SK-N-SH (cell line): ENCODE measurements at regions of chr15 and their contacts with region 1.

Region 1: GRCh38 chr15:93030430-93031105 is 58.4 kb downstream of the RGMA start:
- DNase-seq: peak; percentile 91
- H3K4me3 ChIP-seq: peak overlapping the region in 1 of 2 experiments; percentile 1; a peak in 1 of 4 replicates
- H3K27ac ChIP-seq: no peak overlapping the region; a peak in 1 of 4 replicates
- H3K4me1 ChIP-seq: peaks cover 19 to 20% of the 10 kb centered on the region in 2 experiments; a peak in 3 of 4 replicates
- H3K27me3 ChIP-seq: no peaks in the 10 kb centered on the region
- CTCF ChIP-seq: peak; percentile 84
- EP300 ChIP-seq: no peak
- RAD21 ChIP-seq: peak; percentile 91

Region 2: GRCh38 chr15:92797168-92797951 is 233.2 kb before region 1 on chr15:
- CTCF ChIA-PET with region 1: interaction called, 23 read pairs
- POLR2A ChIA-PET with region 1: no interaction called
- DNase-seq: peak; percentile 62
- H3K4me3 ChIP-seq: no peak overlapping the region
- H3K27ac ChIP-seq: peak overlapping the region in 1 of 2 experiments; percentile 27; a peak in 1 of 4 replicates
- H3K4me1 ChIP-seq: no peaks in the 10 kb centered on the region
- H3K27me3 ChIP-seq: no peaks in the 10 kb centered on the region
- CTCF ChIP-seq: peak; percentile 80
- EP300 ChIP-seq: no peak
- RAD21 ChIP-seq: peak; percentile 80

Region 3: GRCh38 chr15:92845126-92845508 is 185.5 kb before region 1 on chr15:
- CTCF ChIA-PET with region 1: no interaction called
- POLR2A ChIA-PET with region 1: no interaction called
- DNase-seq: no peak
- H3K4me3 ChIP-seq: no peak overlapping the region
- H3K27ac ChIP-seq: peak overlapping the region; percentile 26 to 61; a peak in 2 of 4 replicates
- H3K4me1 ChIP-seq: peaks cover 0 to 3% of the 10 kb centered on the region in 2 experiments; a peak in 1 of 4 replicates
- H3K27me3 ChIP-seq: no peaks in the 10 kb centered on the region
- CTCF ChIP-seq: no peak
- EP300 ChIP-seq: no peak
- RAD21 ChIP-seq: no peak

Region 4: DNA sequence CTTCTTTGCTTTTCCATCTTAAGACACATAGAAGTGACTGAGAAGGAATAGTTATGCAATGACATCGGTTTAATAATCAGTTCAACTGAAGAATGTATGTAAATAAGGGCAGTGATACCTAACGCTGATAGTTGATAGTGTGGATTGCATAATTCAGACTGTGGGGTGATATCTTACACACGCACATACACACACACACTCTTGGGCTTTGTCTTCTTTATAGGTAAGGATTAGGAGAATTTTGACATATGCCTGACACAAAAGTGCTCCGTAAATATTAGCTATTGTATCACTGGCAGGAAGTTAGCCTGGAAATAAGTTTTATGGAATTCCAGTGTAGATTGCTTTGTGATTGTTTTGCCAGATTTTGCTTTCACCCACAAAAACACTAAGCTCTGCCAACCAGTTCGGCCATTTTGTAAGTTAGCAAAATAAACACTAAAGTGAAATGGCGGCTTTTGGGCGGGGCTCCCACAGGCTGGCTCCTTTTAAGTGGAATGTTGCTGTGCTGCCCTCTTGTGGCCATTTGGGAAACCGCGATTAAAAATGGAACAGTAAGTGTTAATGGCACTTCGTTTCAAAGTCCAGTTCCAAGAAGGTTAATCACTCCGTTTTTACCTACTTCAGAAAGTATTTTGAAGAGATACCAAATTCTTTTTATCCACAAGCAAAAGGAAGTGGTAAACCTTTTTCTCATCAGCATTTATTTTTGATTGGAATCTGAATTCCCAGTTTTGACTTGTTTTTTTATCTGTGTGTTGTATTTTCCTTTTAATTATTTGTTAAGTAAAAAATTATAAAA is 112.8 kb before region 1 on chr15:
- CTCF ChIA-PET with region 1: no interaction called
- POLR2A ChIA-PET with region 1: no interaction called
- DNase-seq: peak; percentile 76
- H3K4me3 ChIP-seq: no peak overlapping the region; a peak in 1 of 4 replicates
- H3K27ac ChIP-seq: peak overlapping the region; percentile 88 to 90
- H3K4me1 ChIP-seq: peaks cover 9 to 41% of the 10 kb centered on the region in 2 experiments
- H3K27me3 ChIP-seq: no peaks in the 10 kb centered on the region
- CTCF ChIP-seq: peak; percentile 94
- EP300 ChIP-seq: 0 out of 4 replicates have a peak, but pooled peaks of 1 of the 2 experiments have one; percentile 1
- RAD21 ChIP-seq: peak; percentile 84

Region 5: DNA sequence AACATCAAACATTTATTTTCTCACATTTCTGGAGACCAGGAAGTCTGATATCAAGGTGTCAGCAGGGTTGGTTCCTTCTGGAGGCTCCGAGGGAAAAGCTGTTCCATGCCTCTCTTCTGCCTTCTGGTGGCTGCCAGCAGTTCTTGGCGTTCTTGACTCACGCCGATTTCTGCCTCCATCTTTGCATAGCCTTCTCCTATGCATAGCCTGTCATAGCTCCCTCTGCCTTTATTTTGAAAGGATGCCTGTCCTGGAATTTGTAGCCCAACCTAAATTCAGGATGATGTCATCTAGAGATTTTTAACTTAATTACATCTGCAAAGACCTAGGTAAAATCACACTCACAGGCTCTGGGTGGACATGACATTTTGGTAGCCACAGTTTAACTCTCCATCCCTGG is 12.0 kb before region 1 on chr15:
- CTCF ChIA-PET with region 1: interaction called, 18 read pairs
- POLR2A ChIA-PET with region 1: interaction called, 4 read pairs
- DNase-seq: no peak
- H3K4me3 ChIP-seq: no peak overlapping the region
- H3K27ac ChIP-seq: no peak overlapping the region
- H3K4me1 ChIP-seq: no peaks in the 10 kb centered on the region
- H3K27me3 ChIP-seq: no peaks in the 10 kb centered on the region
- CTCF ChIP-seq: peak; percentile 23; the same call in 1 of the 2 replicates
- EP300 ChIP-seq: no peak
- RAD21 ChIP-seq: 0 out of 2 replicates have a peak, but pooled peaks have one; percentile 20

Region 6: DNA sequence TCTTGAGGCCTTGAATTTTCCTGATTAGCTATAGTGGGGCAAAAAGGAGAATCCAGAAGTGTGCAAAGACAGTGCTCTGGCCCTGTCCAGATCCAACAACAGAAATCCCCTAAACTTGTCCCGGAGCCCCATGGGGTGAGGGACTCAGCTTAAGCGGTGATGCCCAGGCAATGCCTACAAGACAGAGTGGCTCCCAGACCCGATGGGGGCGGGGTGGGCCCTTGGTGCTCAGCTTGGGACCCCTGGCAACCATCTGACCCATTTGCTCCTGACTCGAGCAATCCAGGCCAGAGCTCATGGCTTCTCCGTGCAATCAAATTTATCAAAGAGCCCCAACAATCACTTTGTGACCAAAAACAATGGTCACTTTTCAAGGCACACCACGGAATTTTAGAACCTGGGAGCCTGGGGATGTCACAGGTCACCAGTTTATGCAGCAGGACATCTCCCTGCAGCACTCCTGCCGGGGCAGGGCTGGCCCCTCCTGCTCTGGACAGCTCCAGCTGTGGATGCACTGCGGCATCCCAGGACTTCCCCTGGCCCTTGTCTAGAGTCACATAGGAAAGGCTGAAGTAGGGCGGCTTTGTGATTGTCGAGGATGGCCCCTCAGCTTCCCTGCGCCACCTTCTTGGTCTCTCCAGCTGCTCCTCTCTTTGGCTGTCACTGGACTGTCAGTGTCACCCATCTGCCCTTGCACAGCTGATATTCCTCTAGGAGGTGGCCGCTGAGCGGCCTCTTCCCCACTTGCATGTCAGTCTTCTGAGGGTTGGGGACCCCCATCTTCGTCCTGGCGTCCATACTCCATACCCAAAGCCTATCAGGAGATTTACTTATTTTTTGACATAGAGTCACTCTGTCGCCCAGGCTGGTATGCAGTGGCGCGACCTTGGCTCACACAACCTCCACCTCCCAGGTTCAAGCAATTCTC is 30.0 kb after region 1 on chr15:
- CTCF ChIA-PET with region 1: interaction called, 14 read pairs
- POLR2A ChIA-PET with region 1: no interaction called
- DNase-seq: no peak
- H3K4me3 ChIP-seq: no peak overlapping the region
- H3K27ac ChIP-seq: no peak overlapping the region
- H3K4me1 ChIP-seq: peaks cover 0 to 3% of the 10 kb centered on the region in 2 experiments; a peak in 2 of 4 replicates
- H3K27me3 ChIP-seq: no peaks in the 10 kb centered on the region
- CTCF ChIP-seq: no peak
- EP300 ChIP-seq: no peak
- RAD21 ChIP-seq: no peak

Region 7: GRCh38 chr15:93072411-93073394 is 42.1 kb after region 1 on chr15:
- CTCF ChIA-PET with region 1: interaction called, 12 read pairs
- POLR2A ChIA-PET with region 1: no interaction called
- DNase-seq: peak; percentile 95
- H3K4me3 ChIP-seq: peak overlapping the region; percentile 70 to 87
- H3K27ac ChIP-seq: peak overlapping the region in 1 of 2 experiments; percentile 30; a peak in 1 of 4 replicates
- H3K4me1 ChIP-seq: peaks cover 5 to 8% of the 10 kb centered on the region in 2 experiments
- H3K27me3 ChIP-seq: no peaks in the 10 kb centered on the region
- CTCF ChIP-seq: no peak
- EP300 ChIP-seq: no peak
- RAD21 ChIP-seq: no peak

Region 8: GRCh38 chr15:94125156-94125555 is 1094.6 kb after region 1 on chr15:
- CTCF ChIA-PET with region 1: interaction called, 191 read pairs
- POLR2A ChIA-PET with region 1: no interaction called
- DNase-seq: no peak
- H3K4me3 ChIP-seq: no peak overlapping the region
- H3K27ac ChIP-seq: peak overlapping the region in 1 of 2 experiments; percentile 16; a peak in 1 of 4 replicates
- H3K4me1 ChIP-seq: peaks cover 0 to 6% of the 10 kb centered on the region in 2 experiments; a peak in 1 of 4 replicates
- H3K27me3 ChIP-seq: no peaks in the 10 kb centered on the region
- CTCF ChIP-seq: no peak
- EP300 ChIP-seq: peak in 1 of 2 experiments; percentile 18; a peak in 1 of 4 replicates
- RAD21 ChIP-seq: no peak